H1 (cell line): ENCODE measurements at regions of chr3 and their contacts with region 1.

Region 1: DNA sequence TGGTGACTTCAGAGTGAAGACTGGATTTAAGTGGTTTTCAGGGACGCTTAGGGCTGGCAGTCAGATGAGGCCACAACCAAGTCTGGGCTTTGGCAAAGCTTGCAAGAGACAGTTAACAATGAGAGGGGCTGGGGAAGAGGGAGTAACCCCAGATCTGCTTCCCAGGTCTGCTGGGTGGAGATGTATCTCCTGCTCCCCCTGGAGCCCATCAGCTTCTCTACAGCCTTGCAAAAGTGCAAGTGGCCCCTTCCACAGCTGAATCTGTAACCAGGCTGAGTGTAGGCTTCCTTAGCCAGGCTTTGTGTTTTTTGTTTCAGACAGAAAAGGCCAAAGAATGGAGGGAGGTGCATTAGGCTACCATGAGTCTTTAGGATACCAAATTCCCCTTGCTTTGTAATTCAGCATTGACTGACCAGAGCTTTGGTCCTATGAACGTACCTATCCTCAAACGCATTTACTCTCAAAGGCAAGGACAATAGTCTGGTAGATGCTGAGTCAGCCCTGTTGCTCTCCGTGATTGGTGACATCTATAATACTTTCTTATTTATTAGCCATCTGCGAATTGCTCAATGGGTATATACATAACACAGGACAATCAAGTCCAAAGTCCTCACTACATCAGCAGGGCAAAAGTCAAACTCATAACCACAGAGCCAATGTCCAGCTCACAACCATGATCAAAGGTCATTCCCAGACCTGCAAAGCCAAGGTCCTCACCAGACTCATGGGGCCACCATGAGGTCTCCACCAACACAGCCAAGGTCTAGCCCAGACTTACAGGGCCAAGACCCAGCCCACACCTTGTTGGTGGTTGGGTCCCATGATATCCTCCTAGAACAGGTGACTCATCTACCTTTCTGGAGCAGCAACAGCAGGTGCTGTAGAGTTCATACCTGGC is 17.1 kb downstream of the CCDC13 start:
- DNase-seq: peak in 1 of 2 experiments; percentile 52
- H3K4me3 ChIP-seq: no peak overlapping the region
- H3K27ac ChIP-seq: no peak overlapping the region
- H3K4me1 ChIP-seq: no peaks in the 10 kb centered on the region
- H3K27me3 ChIP-seq: no peaks in the 10 kb centered on the region
- CTCF ChIP-seq: peak; percentile 63 to 89 (median 73)
- EP300 ChIP-seq: no peak
- POLR2A ChIP-seq: no peak
- RAD21 ChIP-seq: peak; percentile 75 to 83

Region 2: GRCh38 chr3:42769477-42770131 is 13.7 kb after region 1 on chr3:
- CTCF ChIA-PET with region 1: interaction called, 24 read pairs
- POLR2A ChIA-PET with region 1: interaction called, 4 read pairs
- DNase-seq: no peak
- H3K4me3 ChIP-seq: no peak overlapping the region
- H3K27ac ChIP-seq: no peak overlapping the region
- H3K4me1 ChIP-seq: peaks cover 0 to 7% (median 3%) of the 10 kb centered on the region in 4 experiments; a peak in 2 of 7 replicates
- H3K27me3 ChIP-seq: peaks cover 0 to 6% (median 5%) of the 10 kb centered on the region in 4 experiments; a peak in 3 of 7 replicates
- CTCF ChIP-seq: no peak
- EP300 ChIP-seq: no peak
- POLR2A ChIP-seq: no peak
- RAD21 ChIP-seq: no peak